ENCODE measurements at regions of chr3 and their contacts with region 1.

Region 1: GRCh38 chr3:42247576-42248027 is 18.4 kb downstream of the CCK start:
- DNase-seq: peak in 1 of 2 experiments; percentile 84
- H3K4me3 ChIP-seq: no peak overlapping the region
- H3K27ac ChIP-seq: no peak overlapping the region
- H3K4me1 ChIP-seq: no peaks in the 10 kb centered on the region
- H3K27me3 ChIP-seq: no peaks in the 10 kb centered on the region
- CTCF ChIP-seq: peak; percentile 18 to 94 (median 64)
- EP300 ChIP-seq: no peak
- POLR2A ChIP-seq: no peak
- RAD21 ChIP-seq: peak; percentile 96 to 98

Region 2: DNA sequence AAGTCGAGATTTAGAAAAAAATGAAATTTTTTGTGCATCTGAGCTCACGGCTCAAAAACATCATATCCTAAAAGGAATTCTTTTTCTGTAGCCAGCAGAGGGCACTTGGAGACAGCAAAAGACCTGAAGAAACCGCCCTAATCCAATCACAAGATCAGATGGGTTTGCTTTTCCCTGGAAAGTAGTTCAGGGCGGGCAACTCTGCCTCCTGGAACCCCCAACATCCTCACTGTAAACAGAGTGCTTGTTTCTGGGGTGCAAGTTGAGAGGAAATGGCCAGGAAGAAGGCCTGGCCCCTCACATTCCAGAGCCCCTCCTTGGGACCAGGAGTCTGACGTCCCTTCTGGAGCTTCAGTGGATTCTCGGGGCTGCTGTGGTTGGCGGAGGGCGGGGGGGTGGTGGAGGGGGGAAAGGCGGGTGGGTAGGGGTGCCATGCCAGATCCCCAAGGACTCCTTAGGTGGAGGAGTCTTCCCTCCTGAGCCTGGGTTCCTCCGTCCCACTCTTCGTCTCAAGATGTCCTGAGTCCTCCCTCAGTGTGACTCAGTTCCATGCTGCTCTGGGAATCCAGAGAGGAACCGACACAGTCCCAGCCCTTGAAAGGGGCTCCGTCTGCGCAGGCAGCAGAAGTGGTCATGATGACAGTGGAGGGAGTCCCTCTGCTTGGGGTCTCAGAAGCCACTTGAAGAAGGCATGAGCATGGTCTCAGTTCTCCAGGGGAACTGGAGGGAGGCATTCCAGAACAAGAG is 17.5 kb before region 1 on chr3:
- CTCF ChIA-PET with region 1: interaction called, 27 read pairs
- POLR2A ChIA-PET with region 1: no interaction called
- DNase-seq: no peak
- H3K4me3 ChIP-seq: no peak overlapping the region
- H3K27ac ChIP-seq: no peak overlapping the region
- H3K4me1 ChIP-seq: 0 out of 7 replicates have a peak, but pooled peaks cover 0 to 4% (median 0%) of the 10 kb centered on the region in 4 experiments
- H3K27me3 ChIP-seq: no peaks in the 10 kb centered on the region; a peak in 1 of 7 replicates
- CTCF ChIP-seq: peak in 2 of 3 experiments; percentile 61 to 67; a peak in 3 of 4 replicates
- EP300 ChIP-seq: no peak
- POLR2A ChIP-seq: no peak
- RAD21 ChIP-seq: peak; percentile 86 to 88

Region 3: GRCh38 chr3:42264399-42265058 is 16.9 kb after region 1 on chr3:
- CTCF ChIA-PET with region 1: interaction called, 68 read pairs
- POLR2A ChIA-PET with region 1: interaction called, 3 read pairs
- DNase-seq: peak in 1 of 2 experiments; percentile 60
- H3K4me3 ChIP-seq: no peak overlapping the region
- H3K27ac ChIP-seq: no peak overlapping the region
- H3K4me1 ChIP-seq: peaks cover 0 to 9% (median 1%) of the 10 kb centered on the region in 4 experiments; a peak in 5 of 7 replicates
- H3K27me3 ChIP-seq: peaks cover 2 to 31% (median 30%) of the 10 kb centered on the region in 4 experiments
- CTCF ChIP-seq: no peak
- EP300 ChIP-seq: no peak
- POLR2A ChIP-seq: no peak
- RAD21 ChIP-seq: no peak

Region 4: DNA sequence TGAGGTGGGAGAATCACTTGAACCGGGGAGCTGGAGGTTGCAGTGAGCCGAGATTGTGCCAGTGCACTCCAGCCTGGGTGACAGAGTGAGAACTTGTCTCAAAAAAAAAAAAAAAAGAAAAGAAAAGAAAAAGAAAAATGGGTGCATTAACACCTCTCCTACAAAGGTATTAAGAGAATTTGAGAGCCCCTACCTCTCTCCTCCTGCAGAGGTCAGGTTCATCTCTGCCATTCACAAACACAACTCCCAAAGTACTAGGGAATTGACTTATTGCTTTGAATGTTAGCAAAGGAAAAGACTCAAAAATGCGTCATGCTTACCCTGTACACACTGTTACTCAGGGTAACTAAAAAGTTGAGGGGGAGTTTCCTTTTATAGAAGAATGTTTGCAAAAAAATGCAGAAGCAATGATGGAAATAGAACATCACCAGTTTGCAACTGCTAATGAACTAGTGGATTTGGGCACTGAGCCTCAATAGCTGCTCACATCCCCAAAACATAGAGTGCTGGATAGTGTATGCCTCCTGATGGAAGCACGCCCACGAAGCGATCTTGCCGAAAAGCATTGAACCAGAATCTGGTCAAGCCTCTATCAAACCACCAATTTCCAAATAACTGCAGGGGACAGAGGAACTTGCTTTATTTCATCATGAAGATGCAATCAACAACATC is 178.3 kb after region 1 on chr3:
- CTCF ChIA-PET with region 1: interaction called, 19 read pairs
- POLR2A ChIA-PET with region 1: no interaction called
- DNase-seq: no peak
- H3K4me3 ChIP-seq: no peak overlapping the region
- H3K27ac ChIP-seq: no peak overlapping the region
- H3K4me1 ChIP-seq: no peaks in the 10 kb centered on the region
- H3K27me3 ChIP-seq: no peaks in the 10 kb centered on the region
- CTCF ChIP-seq: no peak
- EP300 ChIP-seq: no peak
- POLR2A ChIP-seq: no peak
- RAD21 ChIP-seq: peak; percentile 13 to 15; a peak in 3 of 4 replicates

Region 5: DNA sequence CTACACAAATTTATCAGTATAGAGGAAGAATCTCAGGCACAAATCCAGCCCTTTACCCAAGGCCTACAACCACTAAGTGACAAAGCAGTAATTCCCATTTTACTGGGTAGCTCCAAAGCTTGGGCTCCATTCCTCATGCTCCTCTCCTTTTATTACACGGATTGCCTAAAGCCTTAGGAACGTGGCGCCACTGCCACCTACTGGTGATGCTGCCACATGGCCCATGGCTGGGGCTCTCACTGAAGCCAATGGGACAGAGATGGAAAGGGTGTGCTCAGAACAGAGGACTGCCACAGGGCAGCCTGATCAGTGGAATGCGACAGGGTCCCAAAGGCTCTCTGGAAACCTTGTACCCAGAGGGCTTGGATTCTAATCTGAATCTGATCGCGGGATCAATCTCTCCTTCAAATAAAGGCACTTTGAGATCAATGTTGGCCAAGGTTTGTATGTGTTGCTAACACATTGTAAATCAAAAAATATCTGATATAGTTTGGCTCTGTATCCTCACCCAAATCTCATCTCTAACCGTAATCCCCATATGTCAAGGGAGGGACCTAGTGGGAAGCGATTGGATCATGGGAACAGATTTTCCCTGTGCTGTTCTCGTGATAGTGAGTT is 196.3 kb after region 1 on chr3:
- CTCF ChIA-PET with region 1: interaction called, 193 read pairs
- POLR2A ChIA-PET with region 1: interaction called, 3 read pairs
- DNase-seq: peak; percentile 80 to 98
- H3K4me3 ChIP-seq: no peak overlapping the region
- H3K27ac ChIP-seq: no peak overlapping the region
- H3K4me1 ChIP-seq: peaks cover 4 to 34% (median 23%) of the 10 kb centered on the region in 4 experiments; a peak in 6 of 7 replicates
- H3K27me3 ChIP-seq: no peaks in the 10 kb centered on the region
- CTCF ChIP-seq: peak; percentile 97 to 98 (median 98)
- EP300 ChIP-seq: no peak
- POLR2A ChIP-seq: no peak
- RAD21 ChIP-seq: peak; percentile 100

Region 6: GRCh38 chr3:42502429-42503250 is 255.0 kb after region 1 on chr3 and contains the start of gene VIPR1:
- CTCF ChIA-PET with region 1: interaction called, 10 read pairs
- POLR2A ChIA-PET with region 1: no interaction called
- DNase-seq: peak; percentile 73 to 99
- H3K4me3 ChIP-seq: peak within 1 kb of the TSS; percentile 50 to 77 (median 68)
- H3K27ac ChIP-seq: no peak within 1 kb of the TSS
- H3K4me1 ChIP-seq: peaks cover 0 to 12% (median 2%) of the 10 kb centered on the region in 4 experiments; a peak in 3 of 7 replicates
- H3K27me3 ChIP-seq: peaks cover 0 to 52% (median 35%) of the 10 kb centered on the region in 4 experiments; a peak in 6 of 7 replicates
- CTCF ChIP-seq: no peak
- EP300 ChIP-seq: no peak
- POLR2A ChIP-seq: peak in 1 of 2 experiments; percentile 65; a peak in 2 of 3 replicates
- RAD21 ChIP-seq: 0 out of 4 replicates have a peak, but pooled peaks of 1 of the 2 experiments have one; percentile 2
- total RNA-seq, gene VIPR1: 10.1 and 11.3 TPM in 2 replicates

Region 7: GRCh38 chr3:42547401-42547945 is 299.9 kb after region 1 on chr3:
- CTCF ChIA-PET with region 1: interaction called, 82 read pairs
- POLR2A ChIA-PET with region 1: no interaction called
- DNase-seq: peak; percentile 50 to 87
- H3K4me3 ChIP-seq: no peak overlapping the region
- H3K27ac ChIP-seq: no peak overlapping the region
- H3K4me1 ChIP-seq: no peaks in the 10 kb centered on the region
- H3K27me3 ChIP-seq: no peaks in the 10 kb centered on the region
- CTCF ChIP-seq: peak; percentile 90 to 96 (median 91)
- EP300 ChIP-seq: no peak
- POLR2A ChIP-seq: no peak
- RAD21 ChIP-seq: peak; percentile 68 to 72